Endothelial cell of umbilical vein (primary cell): ENCODE measurements at regions of chr7 and their contacts with region 1.

Region 1: GRCh38 chr7:149422129-149422913 is 38.5 kb downstream of the ZNF777 start:
- DNase-seq: peak; percentile 69
- H3K4me3 ChIP-seq: peak overlapping the region; percentile 26 to 42 (median 41)
- H3K27ac ChIP-seq: no peak overlapping the region
- H3K4me1 ChIP-seq: peaks cover 10% of the 10 kb centered on the region
- H3K27me3 ChIP-seq: no peaks in the 10 kb centered on the region
- CTCF ChIP-seq: peak; percentile 68 to 72
- POLR2A ChIP-seq: no peak

Region 2: DNA sequence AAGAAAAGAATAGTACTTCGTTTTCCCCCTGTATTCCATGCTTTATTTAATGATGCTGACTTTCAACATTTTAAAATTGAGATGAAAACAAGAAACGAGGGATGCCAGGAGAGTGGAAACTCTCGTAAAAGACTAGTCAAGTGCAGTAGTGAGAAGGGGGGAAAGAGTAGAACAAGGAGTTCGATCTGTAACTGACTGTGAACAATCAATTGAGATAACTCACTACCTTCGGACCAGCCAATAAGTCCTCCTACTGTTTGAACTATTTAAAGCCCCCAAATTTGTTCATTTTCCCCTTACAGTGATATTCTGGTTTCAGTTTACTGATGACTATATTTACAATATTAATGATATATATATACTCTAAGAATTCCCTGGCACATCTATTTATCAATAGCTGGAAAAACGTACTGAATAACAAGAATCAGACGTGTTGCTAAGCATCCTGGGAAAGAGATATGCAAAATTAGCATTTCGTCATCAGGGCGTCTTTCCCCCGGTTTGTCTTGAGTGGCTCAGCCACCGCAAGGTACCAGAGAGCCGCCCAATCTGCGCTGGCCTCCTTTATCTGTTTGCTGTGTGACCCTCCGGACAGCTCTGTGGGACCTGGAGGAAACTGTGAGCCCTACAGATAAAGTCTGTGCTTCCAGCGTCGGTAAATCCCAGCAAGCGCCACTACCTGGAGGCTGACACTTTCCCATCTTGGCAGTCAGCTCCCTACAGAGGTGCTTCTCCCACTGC is 435.1 kb before region 1 on chr7:
- CTCF ChIA-PET with region 1: no interaction called
- POLR2A ChIA-PET with region 1: no interaction called
- dilution Hi-C with region 1: no loop called
- intact Hi-C with region 1: loop called (anchors 1 kb)
- DNase-seq: peak; percentile 94
- H3K4me3 ChIP-seq: peak overlapping the region; percentile 21 to 63 (median 56)
- H3K27ac ChIP-seq: peak overlapping the region; percentile 32
- H3K4me1 ChIP-seq: peaks cover 11% of the 10 kb centered on the region
- H3K27me3 ChIP-seq: peaks cover 0 to 10% of the 10 kb centered on the region in 2 experiments
- CTCF ChIP-seq: no peak
- POLR2A ChIP-seq: peak; percentile 63

Region 3: GRCh38 chr7:149460493-149461277 is 38.4 kb after region 1 on chr7 and contains the start of gene ZNF777:
- CTCF ChIA-PET with region 1: interaction called, 26 read pairs
- POLR2A ChIA-PET with region 1: no interaction called
- dilution Hi-C with region 1: no loop called
- intact Hi-C with region 1: loop called (anchors 1 kb)
- DNase-seq: peak; percentile 80
- H3K4me3 ChIP-seq: peak within 1 kb of the TSS; percentile 26 to 82 (median 60)
- H3K27ac ChIP-seq: peak within 1 kb of the TSS; percentile 8
- H3K4me1 ChIP-seq: peaks cover 9% of the 10 kb centered on the region
- H3K27me3 ChIP-seq: no peaks in the 10 kb centered on the region
- CTCF ChIP-seq: peak; percentile 40 to 50
- POLR2A ChIP-seq: peak; percentile 77
- total RNA-seq, gene ZNF777: 11.1 and 12.2 TPM in 2 replicates